Activated B cell treated with CpG ODN at 0.5 μM for 24 hours (primary cell): ENCODE measurements at regions of chr4 and their contacts with region 1.

Region 1: DNA sequence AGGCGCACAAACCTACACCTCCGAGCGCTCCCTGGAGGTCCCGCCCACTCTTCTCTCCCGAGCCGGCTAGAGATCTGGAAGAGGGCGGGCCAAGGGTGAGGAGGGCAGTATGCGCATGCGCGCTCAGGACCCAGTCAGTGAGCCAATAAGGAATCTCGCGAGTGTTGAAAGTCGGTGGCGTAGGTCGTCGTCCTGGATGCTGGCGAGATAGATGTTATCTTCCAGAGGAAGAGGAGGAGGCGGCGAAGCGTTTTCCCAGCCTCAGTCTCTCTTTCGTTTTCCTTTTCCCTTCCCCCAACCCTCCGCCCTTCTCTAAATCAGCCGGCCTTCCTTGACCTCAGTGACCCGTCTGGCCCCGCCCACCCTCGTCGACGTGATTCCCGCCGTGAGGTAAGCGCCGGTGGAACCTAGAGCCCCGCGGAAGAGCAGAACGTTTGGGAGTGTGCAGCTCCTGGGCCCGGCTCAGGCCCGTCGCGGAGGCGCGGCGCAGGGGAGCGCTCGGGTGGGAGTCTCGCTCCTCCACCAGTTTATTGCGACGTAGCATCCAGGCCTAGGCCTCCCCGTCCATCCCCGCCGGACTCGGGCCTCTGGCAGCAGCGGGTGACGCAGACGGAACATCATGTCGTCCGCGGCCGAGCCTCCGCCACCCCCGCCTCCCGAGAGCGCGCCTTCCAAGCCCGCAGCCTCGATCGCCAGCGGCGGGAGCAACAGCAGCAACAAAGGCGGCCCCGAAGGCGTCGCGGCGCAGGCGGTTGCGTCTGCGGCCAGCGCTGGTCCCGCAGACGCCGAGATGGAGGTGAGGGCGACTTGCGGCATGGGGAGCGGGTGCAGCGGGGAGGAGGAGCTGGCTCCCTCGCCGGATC is at the start of gene SMARCA5:
- DNase-seq: peak; percentile 89
- ATAC-seq: peak; percentile 88
- H3K4me3 Mint-ChIP-seq: peak within 1 kb of the TSS; percentile 99
- H3K27ac Mint-ChIP-seq: peak within 1 kb of the TSS; percentile 100
- H3K4me1 Mint-ChIP-seq: peaks cover 47% of the 10 kb centered on the region
- H3K27me3 Mint-ChIP-seq: no peaks in the 10 kb centered on the region
- CTCF ChIP-seq: no peak
- total RNA-seq, gene SMARCA5: 47.3 and 49.8 TPM in 2 replicates

Region 2: GRCh38 chr4:143184217-143185116 is 329.1 kb before region 1 on chr4 and contains the start of gene USP38:
- CTCF ChIA-PET with region 1: no interaction called
- POLR2A ChIA-PET with region 1: interaction called, 10 read pairs
- intact Hi-C with region 1: loop called (anchors 1 kb)
- DNase-seq: peak; percentile 73
- ATAC-seq: peak; percentile 87
- H3K4me3 Mint-ChIP-seq: peak within 1 kb of the TSS; percentile 93
- H3K27ac Mint-ChIP-seq: peak within 1 kb of the TSS; percentile 94
- H3K4me1 Mint-ChIP-seq: peaks cover 56% of the 10 kb centered on the region
- H3K27me3 Mint-ChIP-seq: no peaks in the 10 kb centered on the region
- CTCF ChIP-seq: no peak
- total RNA-seq, gene USP38: 20.9 and 24.9 TPM in 2 replicates

Region 3: GRCh38 chr4:143358923-143359643 is 154.5 kb before region 1 on chr4:
- CTCF ChIA-PET with region 1: no interaction called
- POLR2A ChIA-PET with region 1: no interaction called
- intact Hi-C with region 1: loop called (anchors 1 kb)
- DNase-seq: no peak
- ATAC-seq: peak; percentile 88
- H3K4me3 Mint-ChIP-seq: peak overlapping the region; percentile 65
- H3K27ac Mint-ChIP-seq: peak overlapping the region; percentile 83
- H3K4me1 Mint-ChIP-seq: peaks cover 66% of the 10 kb centered on the region
- H3K27me3 Mint-ChIP-seq: no peaks in the 10 kb centered on the region
- CTCF ChIP-seq: no peak

Region 4: GRCh38 chr4:143399113-143399949 is 114.2 kb before region 1 on chr4:
- CTCF ChIA-PET with region 1: no interaction called
- POLR2A ChIA-PET with region 1: no interaction called
- intact Hi-C with region 1: loop called (anchors 1 kb)
- DNase-seq: no peak
- ATAC-seq: peak; percentile 56
- H3K4me3 Mint-ChIP-seq: no peak overlapping the region
- H3K27ac Mint-ChIP-seq: no peak overlapping the region
- H3K4me1 Mint-ChIP-seq: peaks cover 30% of the 10 kb centered on the region
- H3K27me3 Mint-ChIP-seq: no peaks in the 10 kb centered on the region
- CTCF ChIP-seq: no peak

Region 5: GRCh38 chr4:143531380-143531779 is 17.8 kb after region 1 on chr4:
- CTCF ChIA-PET with region 1: no interaction called
- POLR2A ChIA-PET with region 1: no interaction called
- intact Hi-C with region 1: loop called (anchors 2 kb)
- DNase-seq: no peak
- ATAC-seq: no peak
- H3K4me3 Mint-ChIP-seq: no peak overlapping the region
- H3K27ac Mint-ChIP-seq: no peak overlapping the region
- H3K4me1 Mint-ChIP-seq: no peaks in the 10 kb centered on the region
- H3K27me3 Mint-ChIP-seq: no peaks in the 10 kb centered on the region
- CTCF ChIP-seq: no peak

Region 6: DNA sequence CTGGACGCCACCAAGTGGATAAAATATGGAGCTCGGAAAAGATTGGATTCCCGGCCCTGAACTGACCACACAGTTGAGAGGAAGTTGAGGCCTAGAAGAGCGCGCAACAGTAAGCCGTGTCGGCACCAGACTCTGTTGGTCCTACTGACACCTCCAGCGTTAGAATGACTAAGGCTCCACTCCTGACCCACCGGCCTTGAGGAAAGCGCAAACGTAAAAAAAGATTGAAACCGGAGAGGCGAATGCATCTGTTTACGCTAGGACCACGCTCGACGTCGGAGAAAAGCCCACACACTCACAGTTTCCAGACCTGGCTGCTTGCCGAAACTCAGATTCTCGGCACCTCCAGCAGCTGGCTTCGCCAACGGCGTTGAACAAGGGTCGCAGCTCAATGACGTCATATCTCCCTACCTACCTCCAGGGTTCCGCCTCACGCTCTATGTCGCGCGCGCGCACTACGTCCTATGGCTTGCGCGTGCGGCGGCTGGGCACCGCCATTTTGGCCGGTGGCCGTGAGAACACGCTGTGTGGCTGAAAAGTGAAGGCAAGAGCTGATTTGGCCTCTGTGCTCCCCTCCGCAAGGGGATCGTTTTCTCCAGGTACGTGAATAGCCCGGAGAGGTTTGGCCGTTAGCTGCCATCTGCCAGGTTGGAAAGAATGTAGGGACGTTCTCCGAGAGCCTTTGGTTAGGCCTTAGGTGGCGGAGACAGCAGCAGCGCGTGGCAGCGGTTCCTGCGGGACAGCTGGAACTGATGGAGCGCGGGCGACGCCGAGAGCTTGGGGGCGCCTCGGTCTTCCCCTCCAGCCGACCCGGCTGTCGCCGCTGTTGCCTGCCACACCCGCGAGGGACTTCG is 1584.5 kb after region 1 on chr4 and contains the starts of genes ABCE1 and ANAPC10:
- CTCF ChIA-PET with region 1: no interaction called
- POLR2A ChIA-PET with region 1: no interaction called
- intact Hi-C with region 1: loop called (anchors 1 kb)
- DNase-seq: peak; percentile 87
- ATAC-seq: peak; percentile 89
- H3K4me3 Mint-ChIP-seq: peak within 1 kb of the TSS; percentile 94
- H3K27ac Mint-ChIP-seq: peak within 1 kb of the TSS; percentile 96
- H3K4me1 Mint-ChIP-seq: peaks cover 51% of the 10 kb centered on the region
- H3K27me3 Mint-ChIP-seq: no peaks in the 10 kb centered on the region
- CTCF ChIP-seq: no peak
- total RNA-seq, gene ABCE1: 75.5 and 81.6 TPM in 2 replicates
- total RNA-seq, gene ANAPC10: 18.2 and 21.8 TPM in 2 replicates